Naive thymus-derived CD4-positive, alpha-beta T cell (primary cell): ENCODE measurements at regions of chr17 and their contacts with region 1.

Region 1: DNA sequence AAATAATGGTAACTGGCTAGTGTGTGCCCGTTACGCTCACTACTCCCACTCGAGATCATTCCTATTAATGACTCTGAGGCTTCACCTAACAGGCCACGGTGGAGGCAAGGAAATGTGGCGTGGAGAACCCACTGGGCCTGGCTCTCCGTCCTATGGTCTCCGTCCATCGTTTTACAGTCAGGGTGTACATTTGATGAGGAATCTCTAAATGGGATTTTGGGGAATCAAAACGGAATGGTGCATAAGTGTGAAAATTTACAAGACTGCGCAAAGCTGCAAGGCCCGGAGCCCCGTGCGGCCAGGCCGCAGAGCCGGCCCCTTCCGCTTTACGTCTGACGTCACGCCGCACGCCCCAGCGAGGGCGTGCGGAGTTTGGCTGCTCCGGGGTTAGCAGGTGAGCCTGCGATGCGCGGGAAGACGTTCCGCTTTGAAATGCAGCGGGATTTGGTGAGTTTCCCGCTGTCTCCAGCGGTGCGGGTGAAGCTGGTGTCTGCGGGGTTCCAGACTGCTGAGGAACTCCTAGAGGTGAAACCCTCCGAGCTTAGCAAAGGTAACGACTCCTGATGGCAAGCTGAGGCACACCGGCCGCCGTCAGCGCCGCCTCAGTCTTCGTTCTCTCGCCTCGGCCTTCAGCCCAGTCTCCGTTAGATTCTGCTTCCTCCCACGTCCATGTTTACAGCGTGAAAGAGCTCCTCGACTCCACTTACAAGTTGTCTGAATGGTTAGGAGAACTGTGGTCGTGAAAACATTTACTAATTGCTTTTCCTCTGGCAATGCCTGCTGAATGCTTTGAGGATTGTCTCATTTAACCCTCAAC is at the start of gene RAD51C:
- DNase-seq: peak; percentile 66 to 86 (median 82)
- ATAC-seq: peak; percentile 99
- H3K4me3 ChIP-seq: peak within 1 kb of the TSS; percentile 75
- H3K4me3 Mint-ChIP-seq: peak within 1 kb of the TSS; percentile 85 to 99 (median 94)
- H3K27ac ChIP-seq: peak within 1 kb of the TSS; percentile 77
- H3K27ac Mint-ChIP-seq: peak within 1 kb of the TSS; percentile 87 to 96 (median 89)
- H3K4me1 ChIP-seq: peaks cover 12 to 17% of the 10 kb centered on the region in 2 donors
- H3K4me1 Mint-ChIP-seq: peaks cover 20 to 37% (median 31%) of the 10 kb centered on the region in 7 donors
- H3K27me3 ChIP-seq: no peaks in the 10 kb centered on the region
- H3K27me3 Mint-ChIP-seq: peaks cover 0 to 2% (median 0%) of the 10 kb centered on the region in 5 donors
- total RNA-seq, gene RAD51C: 11.4 to 52.6 (median 27.8) TPM

Region 2: DNA sequence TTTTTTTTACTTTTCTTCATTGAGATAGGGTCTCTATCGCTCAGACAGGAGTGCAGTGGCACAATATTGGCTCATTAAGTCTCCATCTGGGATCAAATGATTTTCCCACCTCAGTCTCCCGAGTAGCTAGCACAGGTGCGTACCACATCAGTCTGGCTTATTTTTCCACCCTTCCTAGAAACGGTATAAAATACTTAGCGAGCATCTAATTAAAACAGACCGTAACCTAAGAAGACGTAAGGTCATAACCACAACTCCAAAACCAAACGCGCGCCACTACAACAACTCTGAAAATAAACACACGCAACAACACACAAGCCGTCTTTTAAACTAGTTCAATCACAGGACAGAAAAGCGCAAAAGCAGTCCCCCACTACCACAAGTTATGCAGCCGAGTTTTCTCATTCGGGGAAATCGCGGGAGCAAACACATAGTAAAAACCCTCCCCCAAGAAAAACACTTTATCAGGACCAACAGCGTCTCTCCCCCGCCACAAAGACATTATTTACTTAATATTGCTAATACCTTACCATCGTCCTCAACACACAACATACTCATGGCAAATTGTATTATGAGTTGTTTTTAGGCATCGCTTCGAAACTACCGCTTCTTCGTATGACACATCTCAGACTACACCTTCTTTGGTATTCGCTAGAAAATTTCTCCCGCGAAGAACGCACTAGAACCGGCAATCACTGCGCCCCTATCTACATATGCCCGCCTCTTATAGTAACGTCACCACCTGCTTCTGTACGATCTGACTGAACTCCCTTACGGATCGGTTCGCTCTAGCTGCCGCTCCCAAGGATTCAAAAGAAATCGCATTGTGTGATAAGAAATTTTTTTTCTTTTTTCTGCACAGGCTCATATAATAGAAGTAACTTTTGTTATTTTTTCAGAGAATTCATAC is 33.4 kb before region 1 on chr17:
- CTCF ChIA-PET with region 1: no interaction called
- POLR2A ChIA-PET with region 1: interaction called, 3 read pairs
- intact Hi-C with region 1: loop called (anchors 1 kb)
- DNase-seq: peak; percentile 47 to 89 (median 82)
- ATAC-seq: peak; percentile 88
- H3K4me3 ChIP-seq: peak overlapping the region; percentile 44
- H3K4me3 Mint-ChIP-seq: peak overlapping the region; percentile 83 to 93 (median 88)
- H3K27ac ChIP-seq: peak overlapping the region; percentile 82
- H3K27ac Mint-ChIP-seq: peak overlapping the region; percentile 94 to 100 (median 97)
- H3K4me1 ChIP-seq: no peaks in the 10 kb centered on the region
- H3K4me1 Mint-ChIP-seq: peaks cover 10 to 20% (median 15%) of the 10 kb centered on the region in 7 donors
- H3K27me3 ChIP-seq: no peaks in the 10 kb centered on the region
- H3K27me3 Mint-ChIP-seq: peaks cover 0 to 11% (median 0%) of the 10 kb centered on the region in 5 donors